Colonic mucosa (tissue), 4 donors: ENCODE measurements at regions of chr3 and their contacts with region 1.

Region 1: GRCh38 chr3:66276705-66277274 is 56.0 kb downstream of the SLC25A26 start:
- DNase-seq: peak; percentile 75
- H3K4me3 ChIP-seq: no peak overlapping the region
- H3K27ac ChIP-seq: no peak overlapping the region
- H3K4me1 ChIP-seq: no peaks in the 10 kb centered on the region
- H3K27me3 ChIP-seq: no peaks in the 10 kb centered on the region
- CTCF ChIP-seq: peak; percentile 55

Region 2: GRCh38 chr3:66372681-66373350 is 96.0 kb after region 1 on chr3:
- intact Hi-C with region 1: loop called (anchors 5 kb)
- DNase-seq: peak; percentile 63
- H3K4me3 ChIP-seq: no peak overlapping the region
- H3K27ac ChIP-seq: no peak overlapping the region
- H3K4me1 ChIP-seq: peaks cover 2% of the 10 kb centered on the region
- H3K27me3 ChIP-seq: no peaks in the 10 kb centered on the region
- CTCF ChIP-seq: peak; percentile 21

Region 3: GRCh38 chr3:66469220-66469904 is 192.6 kb after region 1 on chr3:
- intact Hi-C with region 1: no loop called
- DNase-seq: no peak
- H3K4me3 ChIP-seq: no peak overlapping the region
- H3K27ac ChIP-seq: no peak overlapping the region
- H3K4me1 ChIP-seq: peaks cover under 1% of the 10 kb centered on the region
- H3K27me3 ChIP-seq: no peaks in the 10 kb centered on the region
- CTCF ChIP-seq: no peak

Region 4: GRCh38 chr3:66692042-66692765 is 415.4 kb after region 1 on chr3:
- intact Hi-C with region 1: no loop called
- DNase-seq: peak; percentile 34
- H3K4me3 ChIP-seq: no peak overlapping the region
- H3K27ac ChIP-seq: no peak overlapping the region
- H3K4me1 ChIP-seq: peaks cover 4% of the 10 kb centered on the region
- H3K27me3 ChIP-seq: no peaks in the 10 kb centered on the region
- CTCF ChIP-seq: no peak